Right lobe of liver (tissue), 6 donors: ENCODE measurements at regions of chr5 and their contacts with region 1.

Region 1: GRCh38 chr5:32232441-32233219 is 58.5 kb upstream of the GOLPH3 start:
- DNase-seq: peak; percentile 79 to 87 (median 80)
- ATAC-seq: peak; percentile 67 to 78 (median 71)
- H3K4me3 ChIP-seq: peak overlapping the region in 1 of 3 donors; percentile 5
- H3K27ac ChIP-seq: peak overlapping the region; percentile 69 to 86 (median 82)
- H3K4me1 ChIP-seq: peaks cover 0 to 44% (median 22%) of the 10 kb centered on the region in 4 donors
- H3K27me3 ChIP-seq: no peaks in the 10 kb centered on the region
- CTCF ChIP-seq: peak; percentile 79 to 93 (median 88)
- POLR2A ChIP-seq: peak; percentile 4

Region 2: GRCh38 chr5:32329308-32329834 is 96.7 kb after region 1 on chr5:
- intact Hi-C with region 1: loop called (anchors 10 kb)
- DNase-seq: peak; percentile 57 to 71 (median 67)
- ATAC-seq: peak; percentile 93 to 96 (median 94)
- H3K4me3 ChIP-seq: no peak overlapping the region
- H3K27ac ChIP-seq: peak overlapping the region in 1 of 3 donors; percentile 5
- H3K4me1 ChIP-seq: peaks cover 0 to 29% (median 13%) of the 10 kb centered on the region in 4 donors
- H3K27me3 ChIP-seq: no peaks in the 10 kb centered on the region
- CTCF ChIP-seq: peak; percentile 71 to 76 (median 72)
- POLR2A ChIP-seq: no peak